ENCODE measurements at regions of chr17 and their contacts with region 1.

Region 1: GRCh38 chr17:7887482-7888183 is 956 bp upstream of the CHD3 start:
- DNase-seq: peak; percentile 96
- H3K4me3 Mint-ChIP-seq: no peak overlapping the region
- H3K27ac Mint-ChIP-seq: no peak overlapping the region
- H3K4me1 Mint-ChIP-seq: peaks cover 5% of the 10 kb centered on the region
- H3K27me3 Mint-ChIP-seq: no peaks in the 10 kb centered on the region

Region 2: GRCh38 chr17:7583253-7584109 is 304.2 kb before region 1 on chr17 and contains the start of gene MPDU1:
- CTCF ChIA-PET with region 1: no interaction called
- intact Hi-C with region 1: loop called (anchors 1 kb)
- DNase-seq: peak; percentile 96
- H3K4me3 Mint-ChIP-seq: peak within 1 kb of the TSS; percentile 95
- H3K27ac Mint-ChIP-seq: peak within 1 kb of the TSS; percentile 100
- H3K4me1 Mint-ChIP-seq: peaks cover 58% of the 10 kb centered on the region
- H3K27me3 Mint-ChIP-seq: no peaks in the 10 kb centered on the region
- total RNA-seq, gene MPDU1: 48.8 to 53.5 TPM

Region 3: DNA sequence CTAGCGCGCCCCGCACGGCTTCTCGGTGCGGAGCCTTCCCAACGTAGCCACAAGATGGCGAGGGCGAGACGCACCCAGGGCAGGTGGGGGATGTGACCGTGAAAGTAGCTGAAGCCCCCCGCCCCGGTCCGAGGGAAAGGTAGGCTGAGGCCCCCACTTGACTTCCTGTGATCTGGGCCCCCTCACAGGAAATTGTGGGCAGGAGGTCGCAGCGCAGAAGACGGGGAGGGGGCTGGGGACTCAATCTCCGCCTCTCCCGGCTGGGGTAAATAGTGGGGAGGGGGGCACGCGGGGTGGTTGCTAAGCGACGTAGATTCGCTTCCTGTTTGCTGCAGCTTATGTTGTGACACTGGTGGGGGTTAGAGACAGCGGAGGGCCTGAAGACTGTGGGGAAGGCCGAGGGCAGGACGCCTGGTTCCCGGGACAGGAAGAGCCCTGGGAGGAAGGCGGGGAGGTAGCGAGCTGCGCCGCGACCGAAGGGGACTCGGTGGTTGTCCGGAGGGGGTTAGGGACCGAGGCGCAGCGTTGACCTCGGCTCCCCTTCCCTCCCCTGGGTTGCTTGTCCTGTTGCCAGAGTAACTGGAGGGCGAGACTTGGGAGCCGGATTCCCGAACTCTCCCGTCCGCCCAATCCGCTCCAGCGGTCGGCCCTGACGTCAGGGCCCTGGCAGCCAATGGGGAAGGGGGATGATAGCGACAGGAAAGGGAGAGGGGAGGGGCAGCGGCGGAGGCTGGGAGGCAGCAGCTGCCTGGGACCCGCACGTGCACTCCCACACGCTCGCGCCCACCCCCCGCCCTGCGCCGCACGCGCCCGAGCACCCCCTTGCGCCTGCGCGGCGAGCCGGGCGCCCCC is 52.4 kb before region 1 on chr17:
- CTCF ChIA-PET with region 1: interaction called, 3 read pairs
- intact Hi-C with region 1: loop called (anchors 1 kb)
- DNase-seq: peak; percentile 94
- H3K4me3 Mint-ChIP-seq: peak overlapping the region; percentile 93
- H3K27ac Mint-ChIP-seq: peak overlapping the region; percentile 94
- H3K4me1 Mint-ChIP-seq: peaks cover 44% of the 10 kb centered on the region
- H3K27me3 Mint-ChIP-seq: no peaks in the 10 kb centered on the region

Region 4: DNA sequence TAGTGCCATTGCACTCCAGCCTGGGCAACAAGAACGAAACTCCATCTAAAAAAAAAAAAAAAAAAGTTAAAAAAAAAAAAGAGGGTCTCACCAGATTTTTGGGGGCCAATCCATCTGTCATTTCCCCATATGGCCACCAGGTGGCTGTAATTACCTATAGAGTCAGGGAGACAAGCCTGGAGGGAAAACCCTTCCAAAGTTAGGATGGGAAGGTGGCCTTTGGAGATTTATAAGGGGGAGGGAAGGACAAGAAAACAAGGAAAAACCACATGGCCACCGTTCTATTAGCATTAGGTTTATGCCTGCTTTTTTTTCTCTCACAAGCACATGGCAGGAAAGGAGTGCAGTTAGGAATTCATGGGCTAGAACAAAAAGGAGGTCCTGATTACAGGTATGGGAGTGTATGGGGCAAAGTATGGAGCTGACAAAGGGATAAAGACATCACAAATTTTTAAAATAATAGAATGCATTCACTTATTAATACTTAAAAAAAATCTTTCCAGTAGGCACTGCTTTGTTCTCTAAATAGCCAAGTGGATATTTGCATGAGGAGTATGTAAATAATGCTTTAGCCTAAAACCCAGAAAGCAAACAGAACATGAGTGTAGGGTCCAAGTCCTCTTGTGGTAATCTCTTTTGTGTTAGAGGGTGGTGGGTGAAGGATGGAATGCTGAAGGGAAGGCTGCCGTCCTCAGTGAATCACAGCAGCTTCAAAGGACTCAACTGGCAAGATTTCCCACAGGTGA is 24.8 kb before region 1 on chr17:
- CTCF ChIA-PET with region 1: interaction called, 4 read pairs
- intact Hi-C with region 1: loop called (anchors 1 kb)
- DNase-seq: peak; percentile 56
- H3K4me3 Mint-ChIP-seq: no peak overlapping the region
- H3K27ac Mint-ChIP-seq: no peak overlapping the region
- H3K4me1 Mint-ChIP-seq: peaks cover 11% of the 10 kb centered on the region
- H3K27me3 Mint-ChIP-seq: no peaks in the 10 kb centered on the region

Region 5: GRCh38 chr17:7931709-7932482 is 44.3 kb after region 1 on chr17 and contains the starts of genes CNTROB and TRAPPC1:
- CTCF ChIA-PET with region 1: no interaction called
- intact Hi-C with region 1: loop called (anchors 1 kb)
- DNase-seq: peak; percentile 100
- H3K4me3 Mint-ChIP-seq: peak within 1 kb of the TSS; percentile 91
- H3K27ac Mint-ChIP-seq: peak within 1 kb of the TSS; percentile 87
- H3K4me1 Mint-ChIP-seq: peaks cover 38% of the 10 kb centered on the region
- H3K27me3 Mint-ChIP-seq: no peaks in the 10 kb centered on the region
- total RNA-seq, gene CNTROB: 49.3 to 56.3 TPM
- total RNA-seq, gene TRAPPC1: 162 to 172 TPM